ENCODE measurements at regions of chr6 and their contacts with region 1.

Region 1: GRCh38 chr6:136289579-136290409 is at the start of gene BCLAF1:
- DNase-seq: peak; percentile 98 to 100 (median 100)
- ATAC-seq: peak; percentile 84
- H3K4me3 ChIP-seq: peak within 1 kb of the TSS; percentile 93
- H3K4me3 Mint-ChIP-seq: peak within 1 kb of the TSS; percentile 94 to 100 (median 98)
- H3K27ac ChIP-seq: peak within 1 kb of the TSS; percentile 99
- H3K27ac Mint-ChIP-seq: peak within 1 kb of the TSS; percentile 99 to 100 (median 100)
- H3K4me1 ChIP-seq: peaks cover 35 to 36% of the 10 kb centered on the region in 2 donors
- H3K4me1 Mint-ChIP-seq: peaks cover 19 to 74% (median 58%) of the 10 kb centered on the region in 7 donors
- H3K27me3 ChIP-seq: no peaks in the 10 kb centered on the region
- H3K27me3 Mint-ChIP-seq: peaks cover 0 to 2% (median 0%) of the 10 kb centered on the region in 5 donors
- total RNA-seq, gene BCLAF1: 202 to 439 (median 262) TPM

Region 2: GRCh38 chr6:135088818-135089809 is 1200.7 kb before region 1 on chr6:
- CTCF ChIA-PET with region 1: no interaction called
- POLR2A ChIA-PET with region 1: interaction called, 6 read pairs
- intact Hi-C with region 1: loop called in 1 of 2 experiments (anchors 1 kb)
- DNase-seq: peak in 4 of 9 donors; percentile 24 to 52 (median 36)
- ATAC-seq: peak; percentile 73
- H3K4me3 ChIP-seq: peak overlapping the region; percentile 50
- H3K4me3 Mint-ChIP-seq: peak overlapping the region; percentile 50 to 86 (median 66)
- H3K27ac ChIP-seq: peak overlapping the region; percentile 69
- H3K27ac Mint-ChIP-seq: peak overlapping the region; percentile 72 to 98 (median 95)
- H3K4me1 ChIP-seq: peaks cover 29 to 63% of the 10 kb centered on the region in 2 donors
- H3K4me1 Mint-ChIP-seq: peaks cover 43 to 98% (median 94%) of the 10 kb centered on the region in 7 donors
- H3K27me3 ChIP-seq: no peaks in the 10 kb centered on the region
- H3K27me3 Mint-ChIP-seq: no peaks in the 10 kb centered on the region

Region 3: GRCh38 chr6:135568366-135568765 is 721.4 kb before region 1 on chr6:
- CTCF ChIA-PET with region 1: no interaction called
- POLR2A ChIA-PET with region 1: no interaction called
- intact Hi-C with region 1: loop called in 1 of 2 experiments (anchors 5 kb)
- DNase-seq: peak in 8 of 9 donors; percentile 27 to 63 (median 44)
- ATAC-seq: peak; percentile 85
- H3K4me3 ChIP-seq: no peak overlapping the region
- H3K4me3 Mint-ChIP-seq: peak overlapping the region in 3 of 10 donors; percentile 5 to 57 (median 13)
- H3K27ac ChIP-seq: no peak overlapping the region
- H3K27ac Mint-ChIP-seq: peak overlapping the region in 4 of 9 donors; percentile 16 to 90 (median 18)
- H3K4me1 ChIP-seq: peaks cover 0 to 9% of the 10 kb centered on the region in 2 donors
- H3K4me1 Mint-ChIP-seq: peaks cover 0 to 77% (median 7%) of the 10 kb centered on the region in 7 donors
- H3K27me3 ChIP-seq: no peaks in the 10 kb centered on the region
- H3K27me3 Mint-ChIP-seq: no peaks in the 10 kb centered on the region

Region 4: GRCh38 chr6:135880066-135880972 is 409.5 kb before region 1 on chr6:
- CTCF ChIA-PET with region 1: no interaction called
- POLR2A ChIA-PET with region 1: interaction called, 27 read pairs
- intact Hi-C with region 1: loop called (anchors 1 kb)
- DNase-seq: peak in 8 of 9 donors; percentile 52 to 86 (median 79)
- ATAC-seq: peak; percentile 95
- H3K4me3 ChIP-seq: peak overlapping the region; percentile 40
- H3K4me3 Mint-ChIP-seq: peak overlapping the region; percentile 81 to 94 (median 86)
- H3K27ac ChIP-seq: peak overlapping the region; percentile 90
- H3K27ac Mint-ChIP-seq: peak overlapping the region; percentile 94 to 99 (median 98)
- H3K4me1 ChIP-seq: peaks cover 16 to 37% of the 10 kb centered on the region in 2 donors
- H3K4me1 Mint-ChIP-seq: peaks cover 31 to 90% (median 79%) of the 10 kb centered on the region in 7 donors
- H3K27me3 ChIP-seq: no peaks in the 10 kb centered on the region
- H3K27me3 Mint-ChIP-seq: no peaks in the 10 kb centered on the region

Region 5: DNA sequence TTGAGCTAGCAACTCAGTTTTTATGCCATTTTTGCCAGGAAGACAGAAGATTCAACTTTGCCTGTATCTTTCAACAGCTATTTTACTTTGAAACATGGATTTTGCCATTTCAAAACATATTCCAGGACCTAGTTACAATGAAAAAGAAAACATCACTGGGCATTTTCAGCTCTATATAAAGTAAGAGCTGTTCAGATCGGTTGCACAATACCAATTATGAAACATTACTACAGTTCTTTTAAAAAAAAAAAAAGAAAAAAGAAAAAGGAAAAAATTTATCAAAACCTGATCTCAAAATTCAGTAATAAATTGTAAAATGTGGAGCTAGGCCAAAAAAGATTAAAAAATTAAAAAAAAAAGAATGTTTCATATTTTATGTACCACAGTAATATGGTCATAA is 15.7 kb before region 1 on chr6:
- CTCF ChIA-PET with region 1: no interaction called
- POLR2A ChIA-PET with region 1: interaction called, 25 read pairs
- intact Hi-C with region 1: loop called (anchors 2 kb)
- DNase-seq: no peak
- ATAC-seq: no peak
- H3K4me3 ChIP-seq: no peak overlapping the region
- H3K4me3 Mint-ChIP-seq: no peak overlapping the region
- H3K27ac ChIP-seq: no peak overlapping the region
- H3K27ac Mint-ChIP-seq: peak overlapping the region in 1 of 9 donors; percentile 53
- H3K4me1 ChIP-seq: peaks cover 0 to 11% of the 10 kb centered on the region in 2 donors
- H3K4me1 Mint-ChIP-seq: peaks cover 18 to 68% (median 58%) of the 10 kb centered on the region in 7 donors
- H3K27me3 ChIP-seq: no peaks in the 10 kb centered on the region
- H3K27me3 Mint-ChIP-seq: no peaks in the 10 kb centered on the region

Region 6: DNA sequence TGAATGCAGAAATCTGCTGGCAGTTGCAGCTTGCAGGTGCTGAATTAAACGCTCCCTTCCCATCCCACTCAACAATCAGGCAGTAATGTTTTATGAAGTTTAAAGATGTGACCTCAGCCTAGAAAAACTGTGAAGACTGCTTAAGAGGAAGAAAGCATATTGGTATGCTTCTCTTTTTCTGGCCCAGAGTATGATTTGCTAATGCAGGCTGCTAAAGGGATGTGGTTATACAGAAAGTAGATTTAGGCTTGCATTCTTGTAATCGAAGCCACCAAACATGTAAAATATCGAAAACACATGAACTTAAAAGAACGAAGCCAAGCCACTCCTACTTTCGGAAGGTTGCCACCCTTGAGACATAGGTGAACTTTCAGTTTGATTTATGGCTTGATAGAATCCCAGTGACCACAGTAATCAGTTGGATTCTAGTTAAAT is 461.7 kb after region 1 on chr6:
- CTCF ChIA-PET with region 1: interaction called, 3 read pairs
- POLR2A ChIA-PET with region 1: no interaction called
- intact Hi-C with region 1: loop called in 1 of 2 experiments (anchors 1 kb)
- DNase-seq: peak in 7 of 9 donors; percentile 28 to 78 (median 68)
- ATAC-seq: peak; percentile 71
- H3K4me3 ChIP-seq: peak overlapping the region; percentile 37
- H3K4me3 Mint-ChIP-seq: peak overlapping the region; percentile 22 to 87 (median 72)
- H3K27ac ChIP-seq: peak overlapping the region; percentile 60
- H3K27ac Mint-ChIP-seq: peak overlapping the region; percentile 78 to 98 (median 91)
- H3K4me1 ChIP-seq: peaks cover 37 to 51% of the 10 kb centered on the region in 2 donors
- H3K4me1 Mint-ChIP-seq: peaks cover 58 to 84% (median 65%) of the 10 kb centered on the region in 7 donors
- H3K27me3 ChIP-seq: no peaks in the 10 kb centered on the region
- H3K27me3 Mint-ChIP-seq: no peaks in the 10 kb centered on the region